ENCODE measurements at regions of chr6 and their contacts with region 1.

Region 1: DNA sequence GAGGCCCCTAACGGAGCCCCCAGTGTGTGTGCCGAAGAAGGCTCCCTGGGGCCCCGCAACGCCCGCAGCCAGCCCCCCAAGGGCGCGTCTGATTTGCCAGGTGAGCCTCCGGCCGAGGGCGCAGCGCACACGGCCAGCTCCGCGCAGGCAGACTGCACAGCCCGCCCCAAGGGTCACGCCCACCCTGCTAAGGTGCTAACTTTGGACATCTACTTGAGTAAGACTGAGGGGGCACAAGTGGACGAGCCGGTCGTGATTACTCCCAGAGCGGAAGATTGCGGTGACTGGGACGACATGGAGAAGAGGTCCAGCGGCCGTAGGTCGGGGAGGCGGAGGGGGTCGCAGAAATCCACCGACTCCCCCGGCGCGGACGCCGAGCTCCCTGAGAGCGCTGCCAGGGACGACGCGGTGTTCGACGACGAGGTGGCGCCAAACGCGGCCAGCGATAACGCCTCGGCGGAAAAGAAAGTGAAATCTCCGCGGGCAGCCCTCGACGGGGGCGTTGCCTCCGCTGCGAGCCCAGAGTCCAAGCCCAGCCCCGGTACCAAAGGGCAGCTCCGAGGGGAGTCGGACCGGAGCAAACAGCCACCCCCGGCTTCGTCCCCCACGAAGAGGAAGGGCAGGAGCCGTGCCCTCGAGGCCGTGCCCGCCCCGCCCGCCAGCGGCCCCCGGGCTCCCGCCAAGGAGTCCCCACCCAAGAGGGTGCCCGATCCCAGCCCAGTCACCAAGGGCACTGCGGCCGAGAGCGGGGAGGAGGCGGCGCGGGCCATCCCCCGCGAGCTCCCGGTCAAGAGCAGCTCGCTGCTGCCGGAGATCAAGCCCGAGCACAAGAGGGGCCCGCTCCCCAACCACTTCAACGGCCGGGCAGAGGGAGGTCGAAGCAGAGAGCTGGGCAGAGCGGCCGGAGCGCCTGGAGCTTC is 117.0 kb downstream of the RTN4IP1 start:
- DNase-seq: peak; percentile 80
- H3K4me3 Mint-ChIP-seq: peak overlapping the region; percentile 87
- H3K27ac Mint-ChIP-seq: peak overlapping the region; percentile 88
- H3K4me1 Mint-ChIP-seq: peaks cover 59% of the 10 kb centered on the region
- H3K27me3 Mint-ChIP-seq: peaks cover 12% of the 10 kb centered on the region

Region 2: GRCh38 chr6:106237286-106237685 is 275.0 kb before region 1 on chr6:
- intact Hi-C with region 1: no loop called
- DNase-seq: no peak
- H3K4me3 Mint-ChIP-seq: no peak overlapping the region
- H3K27ac Mint-ChIP-seq: no peak overlapping the region
- H3K4me1 Mint-ChIP-seq: peaks cover 2% of the 10 kb centered on the region
- H3K27me3 Mint-ChIP-seq: no peaks in the 10 kb centered on the region

Region 3: GRCh38 chr6:106325336-106326178 is 186.8 kb before region 1 on chr6 and contains the start of gene ATG5:
- intact Hi-C with region 1: no loop called
- DNase-seq: peak; percentile 100
- H3K4me3 Mint-ChIP-seq: peak within 1 kb of the TSS; percentile 100
- H3K27ac Mint-ChIP-seq: peak within 1 kb of the TSS; percentile 99
- H3K4me1 Mint-ChIP-seq: peaks cover 30% of the 10 kb centered on the region
- H3K27me3 Mint-ChIP-seq: peaks cover 22% of the 10 kb centered on the region
- total RNA-seq, gene ATG5: 33.1 and 34.7 TPM in 2 replicates

Region 4: GRCh38 chr6:106339334-106340029 is 172.8 kb before region 1 on chr6:
- intact Hi-C with region 1: loop called (anchors 5 kb)
- DNase-seq: peak; percentile 40
- H3K4me3 Mint-ChIP-seq: no peak overlapping the region
- H3K27ac Mint-ChIP-seq: no peak overlapping the region
- H3K4me1 Mint-ChIP-seq: peaks cover 8% of the 10 kb centered on the region
- H3K27me3 Mint-ChIP-seq: peaks cover 22% of the 10 kb centered on the region

Region 5: DNA sequence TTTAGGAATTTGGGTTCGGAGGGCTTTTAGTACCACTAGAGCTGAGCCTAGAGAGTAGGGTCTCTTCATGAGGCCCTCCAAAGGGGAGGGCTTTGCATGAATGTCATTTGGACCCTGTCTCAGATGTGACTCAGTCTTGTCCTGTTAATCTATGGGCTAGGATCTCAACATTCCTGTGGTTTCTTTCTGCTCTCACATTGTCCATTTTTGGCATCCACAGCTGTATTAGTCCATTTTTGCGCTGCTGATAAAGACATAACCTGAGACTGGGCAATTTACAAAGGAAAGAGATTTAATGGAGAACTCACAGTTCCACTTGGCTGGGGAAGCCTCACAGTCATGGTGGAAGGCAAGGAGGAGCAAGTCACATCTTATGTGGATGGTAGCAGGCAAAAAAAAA is 90.8 kb before region 1 on chr6:
- intact Hi-C with region 1: no loop called
- DNase-seq: no peak
- H3K4me3 Mint-ChIP-seq: no peak overlapping the region
- H3K27ac Mint-ChIP-seq: no peak overlapping the region
- H3K4me1 Mint-ChIP-seq: no peaks in the 10 kb centered on the region
- H3K27me3 Mint-ChIP-seq: peaks cover 22% of the 10 kb centered on the region

Region 6: GRCh38 chr6:106473812-106474211 is 38.5 kb before region 1 on chr6:
- intact Hi-C with region 1: loop called (anchors 5 kb)
- DNase-seq: no peak
- H3K4me3 Mint-ChIP-seq: no peak overlapping the region
- H3K27ac Mint-ChIP-seq: no peak overlapping the region
- H3K4me1 Mint-ChIP-seq: no peaks in the 10 kb centered on the region
- H3K27me3 Mint-ChIP-seq: peaks cover 3% of the 10 kb centered on the region

Region 7: GRCh38 chr6:106556368-106556960 is 44.2 kb after region 1 on chr6:
- intact Hi-C with region 1: loop called (anchors 2 kb)
- DNase-seq: no peak
- H3K4me3 Mint-ChIP-seq: no peak overlapping the region
- H3K27ac Mint-ChIP-seq: no peak overlapping the region
- H3K4me1 Mint-ChIP-seq: peaks cover 20% of the 10 kb centered on the region
- H3K27me3 Mint-ChIP-seq: no peaks in the 10 kb centered on the region

Region 8: GRCh38 chr6:107114213-107114905 is 602.1 kb after region 1 on chr6:
- intact Hi-C with region 1: loop called (anchors 10 kb)
- DNase-seq: peak; percentile 69
- H3K4me3 Mint-ChIP-seq: peak overlapping the region; percentile 79
- H3K27ac Mint-ChIP-seq: peak overlapping the region; percentile 77
- H3K4me1 Mint-ChIP-seq: peaks cover 21% of the 10 kb centered on the region
- H3K27me3 Mint-ChIP-seq: peaks cover 5% of the 10 kb centered on the region

Measured in activated T-helper 2 cell treated with anti-CD3 and anti-CD28 coated beads, Interferon-gamma antibody, Interleukin-2, Interleukin-4, amounts not matched to agents 10 μg/mL and 5 μg/mL and 100 μg/mL, durations not matched to agents 14 hours and 24 hours and 36 hours (primary cell).